ENCODE measurements at regions of chr2 and their contacts with region 1.

Region 1: DNA sequence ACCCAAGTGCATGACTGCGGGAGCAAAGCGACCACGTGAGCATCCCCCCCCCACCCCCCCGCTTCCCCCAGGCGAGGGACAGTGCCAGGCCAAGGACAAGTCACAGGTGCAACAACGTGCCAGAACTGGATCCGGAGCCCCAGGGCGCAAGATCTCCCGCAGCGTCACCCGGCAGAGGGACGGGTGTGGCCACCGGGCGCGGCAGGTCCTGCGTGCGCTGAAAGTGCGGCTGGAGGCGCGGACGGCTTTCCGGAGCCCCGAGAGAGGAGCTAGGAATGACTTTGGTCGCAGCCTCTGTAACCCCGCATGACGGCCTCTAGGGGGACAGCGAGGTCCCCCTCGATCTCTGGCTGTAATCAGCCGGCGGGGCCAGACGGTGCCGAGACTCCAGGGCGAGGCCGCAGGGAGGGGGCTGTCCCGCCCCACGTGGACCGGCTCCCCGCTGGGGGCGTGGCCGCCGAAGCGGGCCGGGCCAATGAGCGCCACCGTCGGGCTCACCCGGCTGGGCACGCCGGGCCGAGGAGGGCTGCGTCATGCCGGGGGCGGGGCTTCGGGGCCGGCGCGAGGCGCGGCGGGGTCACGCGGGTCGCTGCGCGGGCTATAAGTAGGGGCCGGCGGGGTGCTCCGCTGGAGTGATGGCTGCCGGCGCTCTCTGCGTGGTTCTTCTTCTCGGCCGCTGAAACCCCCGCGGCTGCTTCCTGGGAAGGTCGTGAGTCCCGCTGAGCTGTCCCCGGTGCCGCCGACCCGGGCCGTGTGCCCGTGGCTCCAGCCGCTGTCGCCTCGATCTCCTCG is at the start of gene SLC20A1:
- DNase-seq: peak; percentile 73 to 96
- H3K4me3 ChIP-seq: peak within 1 kb of the TSS; percentile 74 to 96
- H3K27ac ChIP-seq: peak within 1 kb of the TSS; percentile 95 to 98
- H3K4me1 ChIP-seq: peaks cover 0 to 20% of the 10 kb centered on the region in 2 donors
- H3K27me3 ChIP-seq: no peaks in the 10 kb centered on the region
- CTCF ChIP-seq: peak in 2 of 3 experiments; percentile 22 to 31
- total RNA-seq, gene SLC20A1: 18.4 TPM

Region 2: GRCh38 chr2:111120253-111121027 is 1525.1 kb before region 1 on chr2 and contains the start of gene BCL2L11:
- intact Hi-C with region 1: loop called (anchors 5 kb)
- DNase-seq: peak; percentile 61 to 93
- H3K4me3 ChIP-seq: peak within 1 kb of the TSS; percentile 87 to 89
- H3K27ac ChIP-seq: peak within 1 kb of the TSS; percentile 69 to 72
- H3K4me1 ChIP-seq: peaks cover 0 to 17% of the 10 kb centered on the region in 2 donors
- H3K27me3 ChIP-seq: no peaks in the 10 kb centered on the region
- CTCF ChIP-seq: peak in 2 of 3 experiments; percentile 19 to 23
- total RNA-seq, gene BCL2L11: 3.5 TPM

Region 3: GRCh38 chr2:112481050-112481527 is 164.4 kb before region 1 on chr2:
- intact Hi-C with region 1: loop called (anchors 5 kb)
- DNase-seq: peak; percentile 22 to 88
- H3K4me3 ChIP-seq: peak overlapping the region; percentile 81 to 84
- H3K27ac ChIP-seq: peak overlapping the region; percentile 74 to 83
- H3K4me1 ChIP-seq: peaks cover 0 to 19% of the 10 kb centered on the region in 2 donors
- H3K27me3 ChIP-seq: no peaks in the 10 kb centered on the region
- CTCF ChIP-seq: peak; percentile 57 to 91 (median 80)

Region 4: DNA sequence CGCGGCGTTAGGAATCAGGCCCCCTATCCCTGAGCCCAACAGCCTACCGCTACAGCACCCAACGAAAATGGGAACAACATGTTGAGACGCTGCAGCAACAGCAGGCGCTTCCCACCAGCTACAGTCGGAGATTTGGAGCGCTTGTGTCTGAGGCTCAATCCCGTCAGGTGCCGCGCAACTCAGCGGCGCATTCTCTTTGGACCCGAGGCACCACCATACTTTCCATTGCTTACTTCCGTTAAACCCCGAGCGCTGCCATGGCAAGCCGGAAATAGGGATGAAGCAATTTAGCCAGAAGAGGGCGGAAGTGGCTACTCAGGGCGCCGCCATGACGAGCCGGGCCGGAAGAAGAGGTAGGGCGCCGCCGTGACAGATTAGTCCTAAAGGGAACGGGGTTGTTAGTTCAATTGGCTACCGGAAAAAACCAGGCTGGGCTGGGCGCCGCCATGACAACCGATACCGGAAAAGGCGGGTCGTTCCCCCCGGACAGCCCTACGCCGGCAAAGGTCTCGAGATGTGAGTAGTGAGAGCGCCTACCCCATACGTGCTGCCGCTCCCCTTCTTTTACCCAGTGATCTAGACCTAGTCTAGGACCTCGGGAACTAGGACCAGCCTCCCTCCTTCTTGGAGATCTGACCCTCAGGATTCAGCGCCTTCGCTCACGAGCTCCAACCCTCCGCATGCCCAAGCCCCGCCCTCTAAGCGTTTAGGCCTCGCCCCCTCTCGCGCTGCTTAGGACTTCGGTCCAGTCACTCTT is 61.2 kb before region 1 on chr2 and contains the start of gene CHCHD5:
- intact Hi-C with region 1: loop called (anchors 1 kb)
- DNase-seq: peak; percentile 85 to 98
- H3K4me3 ChIP-seq: peak within 1 kb of the TSS; percentile 69 to 78
- H3K27ac ChIP-seq: peak within 1 kb of the TSS; percentile 92 to 95
- H3K4me1 ChIP-seq: peaks cover 4 to 13% of the 10 kb centered on the region in 2 donors
- H3K27me3 ChIP-seq: no peaks in the 10 kb centered on the region
- CTCF ChIP-seq: peak in 1 of 3 experiments; percentile 28
- total RNA-seq, gene CHCHD5: 26.5 TPM

Region 5: DNA sequence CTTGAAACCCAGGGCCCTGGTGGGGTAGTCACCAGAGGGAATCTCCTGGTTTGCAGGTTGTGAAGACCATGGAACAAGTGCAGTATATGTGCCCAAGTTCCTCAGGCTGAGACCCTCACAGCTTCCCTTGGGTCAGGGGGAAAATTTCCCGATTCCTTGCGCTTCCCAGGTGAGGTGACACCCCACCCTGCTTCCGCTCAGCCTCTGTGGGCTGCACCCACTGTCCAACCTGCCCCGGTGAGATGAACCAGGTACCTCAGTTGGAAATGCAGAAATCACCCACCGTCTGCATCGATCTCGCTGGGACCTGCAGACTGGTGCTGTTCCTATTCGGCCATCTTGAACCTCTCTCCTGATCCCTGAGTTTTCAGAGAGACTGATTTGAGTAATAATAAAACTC is 30.5 kb before region 1 on chr2:
- intact Hi-C with region 1: no loop called
- DNase-seq: no peak
- H3K4me3 ChIP-seq: no peak overlapping the region
- H3K27ac ChIP-seq: no peak overlapping the region
- H3K4me1 ChIP-seq: no peaks in the 10 kb centered on the region
- H3K27me3 ChIP-seq: no peaks in the 10 kb centered on the region
- CTCF ChIP-seq: no peak

Region 6: GRCh38 chr2:112626604-112627059 is 18.9 kb before region 1 on chr2:
- intact Hi-C with region 1: loop called (anchors 1 kb)
- DNase-seq: peak in 1 of 2 donors; percentile 78
- H3K4me3 ChIP-seq: peak overlapping the region; percentile 5 to 37
- H3K27ac ChIP-seq: peak overlapping the region; percentile 86 to 88
- H3K4me1 ChIP-seq: peaks cover 0 to 15% of the 10 kb centered on the region in 2 donors
- H3K27me3 ChIP-seq: no peaks in the 10 kb centered on the region
- CTCF ChIP-seq: peak; percentile 68 to 85 (median 72)

Region 7: GRCh38 chr2:112794131-112794733 is 148.7 kb after region 1 on chr2:
- intact Hi-C with region 1: no loop called
- DNase-seq: peak; percentile 41 to 75
- H3K4me3 ChIP-seq: no peak overlapping the region
- H3K27ac ChIP-seq: no peak overlapping the region
- H3K4me1 ChIP-seq: no peaks in the 10 kb centered on the region
- H3K27me3 ChIP-seq: no peaks in the 10 kb centered on the region
- CTCF ChIP-seq: no peak